MCF 10A (cell line): ENCODE measurements at regions of chr20 and their contacts with region 1.

Region 1: GRCh38 chr20:54199721-54200176 is 8.1 kb upstream of the PFDN4 start:
- DNase-seq: peak; percentile 77
- H3K4me3 Mint-ChIP-seq: no peak overlapping the region
- H3K27ac Mint-ChIP-seq: no peak overlapping the region
- H3K4me1 Mint-ChIP-seq: peaks cover 19% of the 10 kb centered on the region
- H3K27me3 Mint-ChIP-seq: no peaks in the 10 kb centered on the region
- CTCF ChIP-seq: peak; percentile 91

Region 2: DNA sequence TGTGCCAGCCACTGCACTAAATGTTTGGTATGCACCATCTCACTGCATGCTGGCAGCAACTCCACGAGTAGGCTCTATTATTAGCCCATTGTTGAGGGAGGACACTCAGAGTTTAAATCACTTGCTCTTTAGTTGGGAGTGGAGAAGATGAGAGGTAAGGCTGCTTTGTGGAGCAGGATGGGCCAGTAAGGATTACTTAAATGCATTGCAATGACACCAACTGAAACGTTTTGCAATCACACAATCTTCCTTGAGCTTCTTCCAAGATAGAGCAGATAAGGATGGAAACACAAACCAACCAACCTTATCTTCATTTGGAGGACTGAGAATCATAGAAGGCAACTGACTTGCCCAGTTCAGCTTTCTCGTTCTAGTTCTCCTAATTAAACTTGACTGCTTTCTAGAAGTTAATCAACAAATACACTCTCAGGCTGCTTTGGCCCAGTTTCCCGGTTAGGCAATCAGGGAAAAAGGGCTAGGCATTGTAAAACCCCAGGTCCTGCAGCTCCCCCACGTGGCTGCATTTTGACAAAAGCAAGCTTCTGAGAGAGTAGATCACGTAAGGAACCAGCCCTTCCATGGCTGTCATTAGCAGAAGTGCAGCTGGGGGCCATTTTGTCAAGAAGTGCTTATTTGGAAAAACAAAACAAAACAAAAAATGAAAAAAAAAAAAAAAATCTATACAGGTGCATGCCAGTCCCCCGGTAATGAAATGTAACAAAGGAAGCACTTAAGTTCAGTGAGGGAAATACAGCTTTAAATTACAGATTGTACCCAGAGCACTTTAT is 260.0 kb before region 1 on chr20:
- CTCF ChIA-PET with region 1: interaction called, 25 read pairs
- POLR2A ChIA-PET with region 1: interaction called, 5 read pairs
- intact Hi-C with region 1: loop called (anchors 5 kb)
- DNase-seq: peak; percentile 95
- H3K4me3 Mint-ChIP-seq: no peak overlapping the region
- H3K27ac Mint-ChIP-seq: peak overlapping the region; percentile 18
- H3K4me1 Mint-ChIP-seq: peaks cover 19% of the 10 kb centered on the region
- H3K27me3 Mint-ChIP-seq: no peaks in the 10 kb centered on the region
- CTCF ChIP-seq: peak; percentile 73

Region 3: GRCh38 chr20:54083459-54083858 is 116.3 kb before region 1 on chr20:
- CTCF ChIA-PET with region 1: interaction called, 23 read pairs
- POLR2A ChIA-PET with region 1: no interaction called
- intact Hi-C with region 1: no loop called
- DNase-seq: no peak
- H3K4me3 Mint-ChIP-seq: no peak overlapping the region
- H3K27ac Mint-ChIP-seq: no peak overlapping the region
- H3K4me1 Mint-ChIP-seq: no peaks in the 10 kb centered on the region
- H3K27me3 Mint-ChIP-seq: no peaks in the 10 kb centered on the region
- CTCF ChIP-seq: no peak

Region 4: DNA sequence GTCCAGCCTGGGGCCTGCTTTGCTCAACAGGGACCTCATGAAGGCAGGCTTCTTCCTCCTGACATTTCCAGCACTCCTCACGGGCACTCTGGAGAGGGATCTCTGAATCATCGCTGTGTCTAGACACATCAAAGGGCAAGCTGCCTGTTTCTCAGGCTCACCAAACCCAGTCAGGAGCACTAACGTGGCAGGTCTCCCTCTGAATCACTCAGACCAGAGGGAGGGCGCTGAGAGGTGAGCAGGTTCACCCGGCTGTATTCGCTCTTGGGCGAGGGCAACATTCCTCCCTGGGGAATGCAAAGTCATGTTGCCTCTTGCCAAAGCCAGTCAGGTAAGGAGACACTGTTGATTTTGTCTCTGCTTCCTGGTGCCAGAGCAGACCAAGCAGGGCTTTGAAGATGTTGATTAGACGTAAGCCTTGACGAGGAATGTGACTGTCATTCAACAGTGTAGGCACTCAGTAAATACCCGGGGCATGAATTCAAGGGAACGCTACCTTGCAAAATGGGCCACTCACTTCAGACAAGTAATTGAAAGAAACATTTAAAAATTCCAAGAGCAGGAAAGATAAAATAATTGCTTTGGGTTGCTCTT is 76.1 kb before region 1 on chr20:
- CTCF ChIA-PET with region 1: interaction called, 30 read pairs
- POLR2A ChIA-PET with region 1: interaction called, 6 read pairs
- intact Hi-C with region 1: no loop called
- DNase-seq: peak; percentile 99
- H3K4me3 Mint-ChIP-seq: peak overlapping the region; percentile 45
- H3K27ac Mint-ChIP-seq: peak overlapping the region; percentile 96
- H3K4me1 Mint-ChIP-seq: peaks cover 37% of the 10 kb centered on the region
- H3K27me3 Mint-ChIP-seq: no peaks in the 10 kb centered on the region
- CTCF ChIP-seq: no peak

Region 5: DNA sequence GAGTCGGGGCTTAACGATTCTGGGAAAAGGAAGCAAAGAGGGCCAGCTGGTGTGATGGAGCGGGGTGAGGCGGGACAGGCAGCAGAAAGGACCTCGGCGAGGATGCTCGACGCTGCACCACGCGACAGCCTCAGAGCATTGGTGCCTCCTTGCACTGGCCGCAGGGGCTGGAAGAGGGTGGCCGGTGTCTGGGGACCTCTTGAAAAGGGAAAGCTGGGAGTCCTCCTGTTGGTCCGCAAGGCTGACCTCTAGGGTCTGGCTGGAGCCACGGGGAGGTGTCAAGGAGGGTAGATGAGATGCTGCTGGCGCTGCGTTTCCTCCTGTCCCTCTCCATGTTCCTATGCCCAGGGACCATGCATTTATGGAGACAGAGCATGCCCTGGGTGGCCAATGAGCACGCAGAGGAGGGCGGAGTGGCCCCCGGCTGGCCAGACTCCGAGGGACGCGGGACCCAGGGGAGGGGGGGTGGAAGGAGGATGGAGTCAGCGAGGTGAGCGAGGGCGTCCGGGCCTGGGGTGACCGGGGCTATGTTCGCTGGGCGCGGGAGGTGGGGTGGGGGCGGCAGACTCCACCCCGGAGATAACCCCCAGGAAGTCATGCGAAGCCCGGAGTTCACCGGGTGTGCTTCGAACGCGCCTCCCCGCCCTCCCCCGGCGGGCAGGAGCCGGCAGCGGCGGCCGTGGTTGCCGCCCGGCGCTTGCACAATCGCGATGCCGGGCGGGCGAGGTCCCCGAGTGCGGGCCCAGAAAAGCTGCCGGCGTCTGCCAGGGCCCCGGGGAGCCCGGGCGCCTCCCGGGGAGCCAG is 25.9 kb before region 1 on chr20 and contains the start of gene CYP24A1:
- CTCF ChIA-PET with region 1: interaction called, 35 read pairs
- POLR2A ChIA-PET with region 1: interaction called, 7 read pairs
- intact Hi-C with region 1: no loop called
- DNase-seq: peak; percentile 41
- H3K4me3 Mint-ChIP-seq: peak within 1 kb of the TSS; percentile 67
- H3K27ac Mint-ChIP-seq: no peak within 1 kb of the TSS
- H3K4me1 Mint-ChIP-seq: peaks cover 20% of the 10 kb centered on the region
- H3K27me3 Mint-ChIP-seq: no peaks in the 10 kb centered on the region
- CTCF ChIP-seq: no peak
- total RNA-seq, gene CYP24A1: 0.28 and 0.34 TPM in 2 replicates

Region 6: GRCh38 chr20:54284934-54285704 is 85.4 kb after region 1 on chr20:
- CTCF ChIA-PET with region 1: no interaction called
- POLR2A ChIA-PET with region 1: no interaction called
- intact Hi-C with region 1: no loop called
- DNase-seq: peak; percentile 8
- H3K4me3 Mint-ChIP-seq: no peak overlapping the region
- H3K27ac Mint-ChIP-seq: no peak overlapping the region
- H3K4me1 Mint-ChIP-seq: peaks cover 12% of the 10 kb centered on the region
- H3K27me3 Mint-ChIP-seq: no peaks in the 10 kb centered on the region
- CTCF ChIP-seq: no peak

Region 7: DNA sequence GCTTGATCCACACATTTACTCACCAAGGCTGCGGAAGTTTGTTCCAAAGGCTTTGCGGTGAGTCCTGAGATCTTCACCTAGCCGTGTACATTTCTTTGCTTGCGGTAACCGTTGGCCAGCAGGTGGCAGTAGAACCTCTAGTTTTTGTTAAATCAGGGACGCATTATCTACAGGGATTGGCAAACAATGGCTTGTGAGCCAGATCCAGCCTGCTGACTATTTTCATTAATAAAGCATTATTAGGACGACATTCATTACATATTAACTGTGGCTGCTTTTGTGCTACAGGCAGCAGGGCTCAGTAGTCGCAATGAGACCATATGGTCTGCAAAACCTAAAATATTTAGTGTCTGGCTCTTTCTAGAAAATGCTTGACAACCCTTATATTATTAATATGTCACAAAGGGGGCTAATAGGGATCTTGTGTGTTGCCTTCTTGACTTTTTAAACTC is 449.8 kb after region 1 on chr20:
- CTCF ChIA-PET with region 1: interaction called, 180 read pairs
- POLR2A ChIA-PET with region 1: no interaction called
- intact Hi-C with region 1: no loop called
- DNase-seq: peak; percentile 82
- H3K4me3 Mint-ChIP-seq: no peak overlapping the region
- H3K27ac Mint-ChIP-seq: no peak overlapping the region
- H3K4me1 Mint-ChIP-seq: no peaks in the 10 kb centered on the region
- H3K27me3 Mint-ChIP-seq: peaks cover 39% of the 10 kb centered on the region
- CTCF ChIP-seq: peak; percentile 71